ENCODE measurements at regions of chr16 and their contacts with region 1.

Region 1: GRCh38 chr16:85717393-85718121 is 28.8 kb upstream of the GINS2 start:
- DNase-seq: peak; percentile 34 to 54
- ATAC-seq: peak in 1 of 2 donors; percentile 38
- H3K4me3 ChIP-seq: no peak overlapping the region
- H3K27ac ChIP-seq: no peak overlapping the region
- H3K4me1 ChIP-seq: peaks cover 26 to 29% of the 10 kb centered on the region in 2 donors
- H3K27me3 ChIP-seq: no peaks in the 10 kb centered on the region
- CTCF ChIP-seq: peak; percentile 69 to 84 (median 82)
- POLR2A ChIP-seq: no peak

Region 2: DNA sequence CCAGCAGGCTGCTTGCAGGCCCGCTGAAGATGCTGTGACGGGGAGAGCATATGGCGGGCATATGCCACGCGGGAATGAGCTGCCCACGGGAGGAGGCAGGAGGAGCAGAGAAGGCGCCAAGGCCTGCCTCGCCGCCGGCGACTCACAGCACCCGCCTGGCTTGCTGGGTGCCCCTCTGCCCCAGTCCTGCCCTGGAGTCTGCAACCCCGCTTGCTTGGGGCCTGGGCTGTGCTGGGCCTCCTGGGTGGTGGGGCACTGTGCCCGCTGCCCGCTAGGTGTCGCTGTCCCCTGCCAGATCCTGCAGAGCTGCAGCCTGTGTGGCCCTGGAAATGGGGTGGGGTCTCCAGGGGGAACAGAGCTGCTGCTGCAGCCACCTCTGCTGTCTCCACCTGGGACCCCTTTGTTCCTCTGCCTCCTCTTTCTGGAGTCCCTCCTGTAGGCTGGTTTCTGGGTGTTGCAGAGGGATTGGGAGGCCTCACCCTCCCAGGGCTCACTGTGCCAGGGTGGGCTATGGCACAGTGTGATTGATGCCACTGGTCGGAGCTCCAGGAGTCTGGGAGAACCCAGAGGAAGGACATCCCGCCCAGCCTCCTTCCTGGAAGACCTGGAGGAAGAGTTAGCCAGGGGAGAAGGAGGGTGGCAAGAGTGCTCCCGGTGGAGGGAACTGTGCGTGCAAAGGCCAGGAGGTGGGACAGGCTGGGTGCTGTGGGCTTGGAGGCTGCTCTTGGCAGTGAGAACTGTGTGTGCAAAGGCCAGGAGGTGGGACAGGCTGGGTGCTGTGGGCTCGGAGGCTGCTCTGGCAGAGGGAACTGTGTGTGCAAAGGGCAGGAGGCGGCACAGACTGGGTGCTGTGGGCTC is 464.2 kb before region 1 on chr16:
- in situ Hi-C with region 1: loop called in 1 of 4 experiments (anchors 25 kb)
- intact Hi-C with region 1: no loop called
- DNase-seq: peak in 1 of 2 donors; percentile 24
- ATAC-seq: peak in 1 of 2 donors; percentile 48
- H3K4me3 ChIP-seq: no peak overlapping the region
- H3K27ac ChIP-seq: no peak overlapping the region
- H3K4me1 ChIP-seq: peaks cover 0 to 10% of the 10 kb centered on the region in 2 donors
- H3K27me3 ChIP-seq: no peaks in the 10 kb centered on the region
- CTCF ChIP-seq: peak; percentile 66 to 90 (median 83)
- POLR2A ChIP-seq: no peak

Region 3: GRCh38 chr16:85275533-85276249 is 441.9 kb before region 1 on chr16:
- in situ Hi-C with region 1: loop called in 1 of 4 experiments (anchors 25 kb)
- intact Hi-C with region 1: loop called (anchors 5 kb)
- DNase-seq: peak; percentile 50 to 57
- ATAC-seq: peak; percentile 51 to 68
- H3K4me3 ChIP-seq: no peak overlapping the region
- H3K27ac ChIP-seq: no peak overlapping the region
- H3K4me1 ChIP-seq: peaks cover 9 to 10% of the 10 kb centered on the region in 2 donors
- H3K27me3 ChIP-seq: no peaks in the 10 kb centered on the region
- CTCF ChIP-seq: peak; percentile 85 to 95 (median 91)
- POLR2A ChIP-seq: no peak

Region 4: DNA sequence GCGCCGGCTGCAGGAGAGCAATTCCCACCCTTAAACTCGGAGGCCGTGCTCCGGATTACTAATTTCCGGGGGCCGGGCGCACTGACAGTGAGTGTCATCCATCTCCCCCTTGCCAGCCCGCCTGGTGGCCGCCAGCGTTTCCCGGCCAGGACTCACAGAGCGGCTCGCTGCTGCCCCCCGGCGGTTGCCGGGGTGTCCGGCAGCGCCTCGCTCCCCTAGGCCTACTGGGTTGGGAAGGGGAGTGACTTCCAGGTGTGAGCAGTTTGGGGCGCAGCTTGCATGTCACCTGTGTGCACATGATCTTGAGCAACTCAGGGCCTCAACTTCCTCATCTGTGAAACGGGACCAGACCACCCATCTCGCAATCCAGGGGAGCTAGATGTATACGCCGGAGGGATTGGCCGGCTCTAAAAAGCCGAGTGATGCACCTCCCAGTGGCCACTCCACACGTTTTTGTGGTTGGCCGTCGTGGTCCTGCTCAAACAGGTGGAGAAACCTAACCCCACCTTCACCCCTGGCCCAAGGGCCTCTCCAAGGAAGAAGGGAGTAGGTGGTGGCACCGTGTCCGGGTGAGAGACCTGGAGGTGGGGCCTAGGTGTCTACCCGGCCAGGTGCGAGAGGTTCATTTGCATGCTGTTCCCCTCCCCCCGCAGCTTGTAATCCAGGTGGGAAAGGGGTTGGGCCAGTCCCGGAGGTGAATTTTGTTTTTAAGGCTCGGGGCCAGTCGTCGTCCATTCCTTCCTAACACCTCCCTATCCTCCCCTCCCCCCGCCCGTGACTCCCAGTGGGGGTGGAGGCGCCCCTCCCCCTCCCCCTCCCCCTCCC is 106.8 kb before region 1 on chr16:
- in situ Hi-C with region 1: no loop called
- intact Hi-C with region 1: loop called (anchors 5 kb)
- DNase-seq: peak; percentile 74 to 83
- ATAC-seq: peak; percentile 24 to 31
- H3K4me3 ChIP-seq: peak overlapping the region; percentile 66 to 96 (median 81)
- H3K27ac ChIP-seq: peak overlapping the region; percentile 91 to 99 (median 95)
- H3K4me1 ChIP-seq: peaks cover 34 to 35% of the 10 kb centered on the region in 2 donors
- H3K27me3 ChIP-seq: no peaks in the 10 kb centered on the region
- CTCF ChIP-seq: peak; percentile 99 to 100 (median 99)
- POLR2A ChIP-seq: no peak

Region 5: DNA sequence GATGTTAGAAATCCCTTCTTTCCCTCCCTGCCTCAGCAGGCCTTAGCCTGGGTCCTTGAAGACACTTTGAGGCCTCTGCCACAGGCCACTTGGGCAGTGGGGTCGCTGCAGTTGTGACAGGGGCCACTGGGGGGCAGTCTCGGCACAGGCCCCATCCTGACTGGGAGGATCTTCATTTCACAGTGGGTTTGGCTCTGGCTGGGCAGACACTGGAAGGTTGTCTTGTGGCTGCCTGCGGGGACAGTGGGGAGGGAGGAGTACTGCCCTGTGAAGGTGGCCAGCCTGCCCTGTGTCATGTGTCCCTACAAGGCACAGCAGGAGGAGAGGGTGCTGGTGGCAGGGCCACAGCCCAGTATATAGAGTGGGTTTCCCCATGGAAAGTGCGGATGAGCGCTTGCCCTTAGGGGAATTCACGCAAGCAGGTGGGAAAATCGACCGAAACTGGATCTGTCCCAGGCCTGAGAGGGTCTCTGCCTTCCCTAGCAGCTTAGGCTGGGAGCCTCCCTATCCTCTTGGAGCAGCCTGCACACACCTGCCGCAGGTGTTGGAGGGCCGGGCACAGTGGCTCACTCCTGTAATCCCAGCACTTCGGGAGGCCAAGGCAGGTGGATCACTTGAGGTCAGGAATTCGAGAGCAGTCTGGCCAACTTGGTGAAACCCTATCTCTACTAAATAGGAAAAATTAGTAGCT is 57.6 kb before region 1 on chr16:
- in situ Hi-C with region 1: loop called in 1 of 4 experiments (anchors 10 kb)
- intact Hi-C with region 1: loop called (anchors 2 kb)
- DNase-seq: peak; percentile 69 to 88
- ATAC-seq: peak; percentile 82 to 86
- H3K4me3 ChIP-seq: no peak overlapping the region
- H3K27ac ChIP-seq: peak overlapping the region; percentile 56 to 65 (median 60)
- H3K4me1 ChIP-seq: peaks cover 21 to 23% of the 10 kb centered on the region in 2 donors
- H3K27me3 ChIP-seq: no peaks in the 10 kb centered on the region
- CTCF ChIP-seq: peak; percentile 88 to 94 (median 91)
- POLR2A ChIP-seq: no peak

Region 6: DNA sequence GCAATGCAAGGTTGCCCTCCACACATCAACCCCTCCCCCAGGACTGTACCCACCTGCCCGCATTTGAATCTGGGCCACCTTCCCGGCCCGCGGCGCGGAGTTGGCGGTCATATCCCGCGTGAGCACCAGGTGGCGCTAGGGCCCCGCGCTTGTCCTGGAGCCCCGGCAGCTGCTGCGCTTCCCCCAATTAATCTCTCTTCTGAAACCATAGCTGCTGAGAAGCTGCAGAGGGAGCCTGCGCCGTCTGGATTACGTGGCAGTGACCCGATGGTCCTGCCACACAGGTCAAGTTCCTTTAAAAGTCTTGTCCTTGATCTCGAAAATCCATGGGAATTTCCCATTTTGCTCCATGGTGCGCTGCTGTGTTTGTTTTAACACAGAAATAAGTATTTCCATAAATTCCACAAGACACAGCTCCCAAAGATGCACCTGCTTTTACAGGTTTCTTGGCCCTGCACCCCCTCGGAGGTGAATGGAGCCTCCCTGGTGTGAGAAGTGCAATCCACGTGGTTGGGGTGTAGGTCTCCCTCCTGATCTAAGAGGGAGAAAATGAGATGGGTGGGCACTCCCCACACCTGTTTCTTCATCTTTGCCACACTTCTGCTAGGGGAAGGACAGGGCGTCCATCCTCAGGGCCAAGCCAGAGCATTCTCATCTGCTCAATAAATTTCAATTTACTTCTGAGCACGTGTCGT is 104.0 kb after region 1 on chr16:
- in situ Hi-C with region 1: no loop called
- intact Hi-C with region 1: no loop called
- DNase-seq: peak; percentile 26 to 39
- ATAC-seq: peak; percentile 52 to 56
- H3K4me3 ChIP-seq: no peak overlapping the region
- H3K27ac ChIP-seq: no peak overlapping the region
- H3K4me1 ChIP-seq: no peaks in the 10 kb centered on the region
- H3K27me3 ChIP-seq: peaks cover 0 to 18% (median 6%) of the 10 kb centered on the region in 3 donors
- CTCF ChIP-seq: peak; percentile 77 to 96 (median 89)
- POLR2A ChIP-seq: no peak